ENCODE measurements at regions of chr7 and their contacts with region 1.

Region 1: DNA sequence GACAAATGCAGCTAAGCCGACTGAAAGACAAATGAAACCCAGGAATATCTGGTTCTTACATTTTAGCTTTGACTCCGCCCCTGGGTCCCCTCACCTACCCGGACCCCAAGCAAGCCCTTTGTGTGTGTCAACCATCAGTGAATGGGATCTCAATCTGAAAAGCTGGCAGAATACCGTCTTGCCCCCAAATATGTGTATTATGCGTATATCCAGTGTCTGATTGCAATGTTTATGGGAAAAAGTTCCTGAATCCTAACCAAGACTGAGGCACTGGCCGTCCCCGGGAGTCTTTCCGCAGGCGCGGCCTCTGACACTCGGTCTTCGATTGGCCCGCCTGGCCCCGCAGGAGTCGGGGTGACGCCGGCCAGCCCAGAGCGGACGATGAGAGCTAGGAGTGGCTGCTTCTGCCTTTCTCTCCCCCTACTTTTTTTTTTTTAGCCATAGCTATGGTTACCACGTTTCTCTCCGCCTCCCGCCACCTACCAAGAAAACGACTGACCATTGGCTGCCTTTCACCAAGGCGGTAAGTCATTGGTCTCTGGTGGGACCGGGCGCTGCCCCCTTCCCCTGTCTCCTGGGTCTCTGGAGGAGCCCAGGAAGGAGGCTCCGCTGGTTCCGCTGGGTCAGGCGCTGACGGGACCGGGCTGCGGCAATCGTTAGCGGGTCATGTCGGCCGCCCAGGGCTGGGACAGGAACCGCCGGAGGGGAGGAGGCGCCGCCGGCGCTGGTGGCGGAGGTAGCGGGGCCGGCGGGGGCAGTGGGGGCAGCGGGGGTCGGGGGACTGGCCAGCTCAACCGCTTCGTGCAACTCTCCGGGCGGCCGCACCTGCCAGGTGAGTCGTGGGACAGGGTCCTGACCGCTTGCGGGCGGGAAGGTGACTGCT is at the start of gene KLHDC10:
- DNase-seq: peak; percentile 98
- H3K4me3 ChIP-seq: peak within 1 kb of the TSS; percentile 51 to 83 (median 69)
- H3K27ac ChIP-seq: peak within 1 kb of the TSS; percentile 65
- H3K4me1 ChIP-seq: peaks cover 14% of the 10 kb centered on the region
- H3K27me3 ChIP-seq: no peaks in the 10 kb centered on the region
- CTCF ChIP-seq: no peak
- total RNA-seq, gene KLHDC10: 22.3 to 23.3 TPM

Region 2: DNA sequence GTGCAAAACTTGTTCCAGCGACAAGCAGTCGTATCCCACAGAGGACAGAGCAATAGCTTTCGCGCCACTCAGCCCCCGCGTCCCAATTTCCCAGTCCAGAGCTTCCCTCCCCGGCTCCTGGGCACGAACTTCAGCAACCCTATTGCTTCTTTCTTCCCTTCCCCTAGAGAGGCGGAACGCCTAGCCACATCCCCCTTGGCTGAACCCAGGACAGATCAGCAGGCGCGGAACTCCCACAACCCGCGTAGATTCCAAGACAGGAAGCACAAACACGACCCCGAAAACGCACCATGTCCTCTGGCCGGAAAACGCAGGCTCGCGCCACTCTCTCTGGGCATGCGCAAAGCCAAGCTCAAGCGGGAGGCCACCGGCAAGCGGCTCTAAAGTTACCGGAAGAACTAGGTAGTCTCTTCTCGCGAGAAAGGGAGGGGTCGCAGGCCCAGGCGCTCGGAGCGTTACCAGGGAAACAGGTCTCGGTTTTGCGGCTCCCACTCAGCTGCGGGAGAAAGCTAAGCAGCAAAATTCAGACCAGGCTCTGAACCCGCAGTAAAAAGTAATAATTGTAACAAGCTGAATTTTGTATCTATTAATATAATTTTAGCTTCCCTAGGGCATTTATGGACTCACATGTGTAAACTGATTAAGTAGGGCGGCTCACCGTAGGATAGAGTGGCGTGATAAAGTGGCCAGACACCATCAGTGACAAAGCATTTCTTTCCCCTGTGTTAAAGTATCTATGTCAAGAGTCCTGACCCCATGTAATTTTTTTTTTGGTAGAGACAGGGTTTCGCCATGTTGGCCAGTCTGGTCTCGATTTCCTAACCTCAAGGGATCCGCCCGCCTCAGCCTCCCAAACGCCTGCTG is 135.1 kb after region 1 on chr7 and contains the start of gene TMEM209:
- CTCF ChIA-PET with region 1: no interaction called
- dilution Hi-C with region 1: no loop called
- in situ Hi-C with region 1: no loop called
- intact Hi-C with region 1: loop called (anchors 5 kb)
- DNase-seq: peak; percentile 93
- H3K4me3 ChIP-seq: peak within 1 kb of the TSS; percentile 91 to 94 (median 91)
- H3K27ac ChIP-seq: peak within 1 kb of the TSS; percentile 89
- H3K4me1 ChIP-seq: peaks cover 8% of the 10 kb centered on the region
- H3K27me3 ChIP-seq: no peaks in the 10 kb centered on the region
- CTCF ChIP-seq: no peak
- total RNA-seq, gene TMEM209: 23.6 to 24.3 TPM

Region 3: GRCh38 chr7:130292682-130293257 is 222.6 kb after region 1 on chr7 and contains the start of gene CPA4:
- CTCF ChIA-PET with region 1: no interaction called
- dilution Hi-C with region 1: no loop called
- in situ Hi-C with region 1: no loop called
- intact Hi-C with region 1: loop called (anchors 5 kb)
- DNase-seq: peak; percentile 98
- H3K4me3 ChIP-seq: peak within 1 kb of the TSS in 1 of 3 experiments; percentile 30
- H3K27ac ChIP-seq: peak within 1 kb of the TSS; percentile 71
- H3K4me1 ChIP-seq: peaks cover 43% of the 10 kb centered on the region
- H3K27me3 ChIP-seq: no peaks in the 10 kb centered on the region
- CTCF ChIP-seq: no peak
- total RNA-seq, gene CPA4: 168 to 495 TPM

Region 4: GRCh38 chr7:130560970-130561369 is 490.8 kb after region 1 on chr7:
- CTCF ChIA-PET with region 1: no interaction called
- dilution Hi-C with region 1: no loop called
- in situ Hi-C with region 1: no loop called
- intact Hi-C with region 1: loop called (anchors 1 kb)
- DNase-seq: peak; percentile 70
- H3K4me3 ChIP-seq: no peak overlapping the region
- H3K27ac ChIP-seq: no peak overlapping the region
- H3K4me1 ChIP-seq: no peaks in the 10 kb centered on the region
- H3K27me3 ChIP-seq: no peaks in the 10 kb centered on the region
- CTCF ChIP-seq: peak; percentile 47 to 73

Region 5: GRCh38 chr7:130758429-130759056 is 688.3 kb after region 1 on chr7:
- CTCF ChIA-PET with region 1: interaction called, 3 read pairs
- dilution Hi-C with region 1: no loop called
- in situ Hi-C with region 1: loop called (anchors 10 kb)
- intact Hi-C with region 1: loop called (anchors 1 kb)
- DNase-seq: peak; percentile 11
- H3K4me3 ChIP-seq: no peak overlapping the region
- H3K27ac ChIP-seq: no peak overlapping the region
- H3K4me1 ChIP-seq: no peaks in the 10 kb centered on the region
- H3K27me3 ChIP-seq: peaks cover 1% of the 10 kb centered on the region
- CTCF ChIP-seq: peak; percentile 57 to 65